Mammary epithelial cell (primary cell): ENCODE measurements at regions of chr6 and their contacts with region 1.

Region 1: DNA sequence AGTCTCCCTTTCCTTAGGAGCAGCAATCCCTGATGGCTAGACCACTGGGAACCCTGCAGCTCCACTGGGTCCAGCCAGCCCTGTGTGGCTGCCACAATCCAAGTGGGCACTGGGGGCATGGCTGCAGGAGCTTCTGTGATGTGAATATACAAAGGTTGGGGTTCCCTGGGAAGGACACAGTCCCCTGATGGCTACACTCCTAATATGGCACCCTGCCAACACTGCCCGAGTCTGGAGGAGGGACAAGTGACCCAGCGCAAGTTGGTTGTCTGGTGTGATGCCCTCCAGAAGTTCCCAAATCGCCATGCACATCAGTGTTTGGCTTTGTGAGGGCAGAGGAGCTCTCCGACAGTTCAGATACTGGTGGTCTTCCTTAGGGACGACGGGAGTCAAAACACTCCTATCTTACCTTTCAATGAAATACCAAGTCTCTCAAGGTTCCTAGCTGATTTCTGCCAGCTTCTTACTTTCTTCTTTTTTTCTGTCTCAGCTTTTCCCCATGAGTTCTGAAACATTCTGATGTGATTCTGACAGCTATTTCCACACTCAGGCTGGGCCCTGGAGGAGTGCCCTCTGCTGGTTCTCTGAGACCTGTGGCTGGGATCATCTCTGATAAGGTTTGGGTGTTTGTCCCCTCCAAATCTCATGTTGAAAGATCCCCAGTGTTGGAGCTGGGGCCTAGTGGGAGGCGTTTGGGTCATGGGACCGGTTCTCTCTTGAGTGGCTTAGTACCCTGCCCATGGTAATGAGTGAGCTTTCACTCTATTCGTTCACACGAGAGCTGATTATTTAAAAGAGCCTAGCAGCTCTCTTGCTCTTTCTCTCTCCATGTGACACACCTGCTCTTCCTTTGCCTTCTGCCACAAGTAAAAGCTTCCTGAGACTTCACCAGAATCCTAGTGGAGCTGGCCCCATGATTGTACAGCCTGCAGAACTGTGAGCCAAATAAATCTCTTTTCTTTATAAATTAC is 15.5 kb upstream of the ZFP57 start:
- DNase-seq: peak; percentile 30
- H3K4me3 ChIP-seq: no peak overlapping the region
- H3K27ac ChIP-seq: no peak overlapping the region
- H3K4me1 ChIP-seq: no peaks in the 10 kb centered on the region
- H3K27me3 ChIP-seq: no peaks in the 10 kb centered on the region
- CTCF ChIP-seq: peak; percentile 77 to 94

Region 2: DNA sequence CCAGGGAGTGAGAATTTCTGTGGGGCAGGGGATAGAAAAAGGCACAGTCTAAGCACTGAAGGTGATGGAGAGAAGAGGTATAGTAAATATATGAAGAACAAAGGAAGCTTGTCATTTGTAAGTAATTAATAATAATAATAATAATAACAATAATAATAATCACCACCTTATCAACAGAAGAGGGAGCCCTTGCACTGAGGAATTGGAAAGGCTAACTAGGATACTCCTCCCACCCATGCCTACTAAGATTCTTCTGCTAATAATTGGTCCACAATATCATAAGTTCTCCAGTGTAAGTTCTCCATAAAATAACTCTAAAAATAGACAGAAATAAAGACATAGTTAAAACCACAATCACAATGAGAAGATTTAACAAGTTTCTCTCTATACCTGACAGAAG is 320.4 kb before region 1 on chr6:
- CTCF ChIA-PET with region 1: no interaction called
- dilution Hi-C with region 1: no loop called
- in situ Hi-C with region 1: no loop called
- intact Hi-C with region 1: loop called (anchors 5 kb)
- DNase-seq: peak; percentile 6
- H3K4me3 ChIP-seq: no peak overlapping the region
- H3K27ac ChIP-seq: no peak overlapping the region
- H3K4me1 ChIP-seq: no peaks in the 10 kb centered on the region
- H3K27me3 ChIP-seq: no peaks in the 10 kb centered on the region
- CTCF ChIP-seq: peak; percentile 28 to 39

Region 3: DNA sequence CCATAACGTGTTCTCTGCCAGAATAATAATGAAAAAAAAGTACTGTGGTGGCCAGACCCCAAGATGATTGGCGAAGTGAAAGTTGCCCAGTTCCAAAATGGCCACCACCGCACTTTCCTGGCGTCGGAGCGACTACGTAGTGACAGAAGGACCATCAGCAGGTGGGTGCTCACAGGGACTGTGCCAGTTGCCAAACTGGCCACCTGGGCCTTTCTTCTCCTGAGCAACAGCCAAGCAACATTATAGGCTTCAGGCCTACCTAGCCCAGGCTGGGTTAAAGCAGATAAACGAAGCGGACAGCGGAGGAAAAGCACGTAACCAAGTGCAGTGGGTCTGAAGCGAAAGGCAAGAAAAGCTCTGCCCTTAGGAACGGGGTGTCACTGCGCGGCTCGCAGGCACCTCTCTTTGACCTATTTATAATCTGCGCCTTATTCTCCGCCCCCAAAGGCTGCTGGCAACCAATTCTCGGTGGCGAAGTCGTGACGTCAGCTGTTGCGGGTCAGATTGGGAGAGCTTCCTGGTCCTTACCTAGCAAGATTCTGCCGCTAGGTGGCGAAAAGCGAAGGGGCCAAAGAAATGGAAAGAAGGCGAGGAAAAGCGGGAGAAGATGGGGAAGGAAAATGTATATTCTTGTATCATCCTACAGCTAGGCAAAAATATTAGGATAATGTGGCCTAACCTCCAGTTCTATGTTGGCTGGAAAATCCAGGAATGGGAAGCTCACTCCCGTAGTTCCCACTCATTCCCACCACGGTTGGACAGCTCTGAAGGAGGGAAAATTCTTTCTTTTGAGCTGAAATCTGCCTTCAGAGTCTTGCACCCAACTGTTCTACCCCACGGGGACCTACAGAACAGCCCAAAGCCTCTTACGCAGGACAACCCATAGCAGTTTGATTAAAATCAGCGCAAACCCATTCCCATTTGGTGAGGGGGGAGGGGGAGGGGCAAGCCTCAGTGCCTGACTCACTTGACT is 46.5 kb before region 1 on chr6:
- CTCF ChIA-PET with region 1: interaction called, 52 read pairs
- dilution Hi-C with region 1: loop called (anchors 5 kb)
- in situ Hi-C with region 1: loop called (anchors 5 kb)
- intact Hi-C with region 1: loop called (anchors 1 kb)
- DNase-seq: peak; percentile 96
- H3K4me3 ChIP-seq: peak overlapping the region; percentile 57 to 60 (median 59)
- H3K27ac ChIP-seq: peak overlapping the region; percentile 68
- H3K4me1 ChIP-seq: peaks cover 6% of the 10 kb centered on the region
- H3K27me3 ChIP-seq: no peaks in the 10 kb centered on the region
- CTCF ChIP-seq: peak; percentile 93 to 98

Region 4: GRCh38 chr6:29656157-29656556 is 40.3 kb before region 1 on chr6:
- CTCF ChIA-PET with region 1: interaction called, 4 read pairs
- dilution Hi-C with region 1: loop called (anchors 5 kb)
- in situ Hi-C with region 1: loop called in 1 of 2 experiments (anchors 5 kb)
- intact Hi-C with region 1: no loop called
- DNase-seq: no peak
- H3K4me3 ChIP-seq: no peak overlapping the region
- H3K27ac ChIP-seq: no peak overlapping the region
- H3K4me1 ChIP-seq: no peaks in the 10 kb centered on the region
- H3K27me3 ChIP-seq: no peaks in the 10 kb centered on the region
- CTCF ChIP-seq: no peak